Activated naive CD8-positive, alpha-beta T cell treated with anti-CD3 and anti-CD28 coated beads, Interleukin-2, amount 10 ng/mL, durations not matched to agents 7 days and 5 days (primary cell): ENCODE measurements at regions of chr1 and their contacts with region 1.

Region 1: GRCh38 chr1:37514350-37515184 is at the start of gene MEAF6:
- DNase-seq: peak; percentile 93
- ATAC-seq: peak; percentile 93
- H3K4me3 Mint-ChIP-seq: peak within 1 kb of the TSS; percentile 96
- H3K27ac Mint-ChIP-seq: peak within 1 kb of the TSS; percentile 96
- H3K4me1 Mint-ChIP-seq: peaks cover 37% of the 10 kb centered on the region
- H3K27me3 Mint-ChIP-seq: no peaks in the 10 kb centered on the region
- total RNA-seq, gene MEAF6: 73.8 to 80.6 TPM

Region 2: GRCh38 chr1:37323486-37324377 is 190.8 kb before region 1 on chr1:
- POLR2A ChIA-PET with region 1: no interaction called
- DNase-seq: no peak
- ATAC-seq: no peak
- H3K4me3 Mint-ChIP-seq: no peak overlapping the region
- H3K27ac Mint-ChIP-seq: no peak overlapping the region
- H3K4me1 Mint-ChIP-seq: peaks cover under 1% of the 10 kb centered on the region
- H3K27me3 Mint-ChIP-seq: peaks cover 25% of the 10 kb centered on the region

Region 3: DNA sequence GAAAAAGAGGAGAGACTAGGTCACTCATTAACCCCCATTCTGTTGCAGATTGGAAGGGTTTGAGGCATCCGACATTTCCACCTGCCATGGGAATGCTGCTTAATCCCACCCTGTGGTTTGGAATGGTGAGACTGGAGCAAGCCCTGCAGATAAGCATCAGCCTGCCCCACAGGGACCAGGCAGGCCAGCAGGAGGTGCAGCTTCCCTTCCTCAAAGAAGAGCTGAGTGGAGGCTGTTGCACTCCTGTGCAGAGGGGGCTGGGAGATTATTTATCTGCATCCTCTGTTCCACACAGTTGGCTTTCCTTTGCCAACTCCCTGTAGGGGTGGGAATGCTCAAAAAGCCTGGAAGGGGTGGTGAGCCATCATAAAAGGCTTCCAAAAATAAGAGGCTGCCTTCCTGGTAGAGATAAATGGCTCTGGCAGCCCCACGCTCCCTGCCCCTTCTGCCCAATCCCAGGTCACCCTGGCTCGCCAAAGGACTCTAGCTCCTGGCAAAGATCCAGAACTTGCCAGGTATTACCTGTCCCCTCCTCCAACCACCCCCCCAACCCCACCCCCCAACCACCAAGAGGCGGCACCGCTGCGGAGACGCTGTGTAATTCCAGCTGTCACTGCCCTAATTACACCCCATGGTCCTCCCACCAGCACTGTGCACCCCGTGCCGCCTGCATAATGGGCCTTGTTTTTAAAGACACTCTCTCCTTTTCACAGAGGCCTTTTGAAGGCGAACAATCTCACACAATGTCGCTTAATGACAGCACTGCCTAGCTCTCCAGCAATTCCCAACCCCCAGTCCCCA is 123.2 kb before region 1 on chr1:
- POLR2A ChIA-PET with region 1: no interaction called
- DNase-seq: no peak
- ATAC-seq: no peak
- H3K4me3 Mint-ChIP-seq: no peak overlapping the region
- H3K27ac Mint-ChIP-seq: no peak overlapping the region
- H3K4me1 Mint-ChIP-seq: no peaks in the 10 kb centered on the region
- H3K27me3 Mint-ChIP-seq: peaks cover 25% of the 10 kb centered on the region

Region 4: GRCh38 chr1:37455516-37455915 is 59.1 kb before region 1 on chr1:
- POLR2A ChIA-PET with region 1: no interaction called
- DNase-seq: no peak
- ATAC-seq: no peak
- H3K4me3 Mint-ChIP-seq: no peak overlapping the region
- H3K27ac Mint-ChIP-seq: no peak overlapping the region
- H3K4me1 Mint-ChIP-seq: peaks cover 9% of the 10 kb centered on the region
- H3K27me3 Mint-ChIP-seq: no peaks in the 10 kb centered on the region

Region 5: DNA sequence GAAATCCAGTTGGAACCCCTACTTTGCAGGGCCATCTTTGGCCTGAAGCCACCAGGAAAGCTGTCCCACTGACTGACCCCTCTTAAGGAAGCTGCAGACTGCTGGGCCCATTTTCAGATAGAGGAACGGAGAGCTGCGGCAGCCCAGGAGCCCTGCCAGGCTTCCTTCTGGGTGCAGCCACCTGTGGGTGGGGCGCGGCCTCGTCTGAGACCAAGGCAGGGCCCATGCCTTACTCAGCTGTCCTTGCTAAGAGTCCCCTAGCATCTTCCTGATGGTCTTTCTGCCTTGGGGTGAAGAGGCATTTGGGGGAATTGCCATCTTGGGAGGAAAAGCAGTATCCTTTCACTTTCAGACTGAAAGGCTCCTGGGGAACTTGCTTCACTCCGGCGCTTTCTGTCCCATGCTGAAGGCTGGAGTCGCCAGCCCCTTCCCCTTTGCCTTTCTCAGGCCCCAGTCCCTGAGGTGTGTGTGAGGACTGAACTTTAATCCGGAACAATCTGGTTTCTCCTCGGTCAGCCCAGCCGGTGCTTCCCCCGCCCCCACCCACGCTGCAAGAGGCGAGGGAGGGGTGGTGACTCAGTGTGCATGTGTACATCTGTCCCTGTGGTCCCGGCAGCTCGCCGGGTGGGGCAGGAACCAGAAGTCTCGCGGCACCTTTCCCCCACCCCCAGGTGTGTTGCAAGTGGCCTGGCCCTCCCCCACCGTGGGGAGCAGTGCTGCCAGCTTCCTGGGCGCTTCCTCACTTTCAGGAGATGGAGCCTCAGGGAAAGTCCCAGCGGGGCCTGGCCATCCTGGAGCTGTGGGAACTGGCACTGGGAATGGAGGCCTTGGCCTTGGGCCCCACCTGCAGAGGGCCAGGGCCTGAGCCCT is 35.1 kb before region 1 on chr1:
- POLR2A ChIA-PET with region 1: interaction called, 32 read pairs
- DNase-seq: peak; percentile 80
- ATAC-seq: peak; percentile 71
- H3K4me3 Mint-ChIP-seq: peak overlapping the region; percentile 99
- H3K27ac Mint-ChIP-seq: peak overlapping the region; percentile 98
- H3K4me1 Mint-ChIP-seq: peaks cover 27% of the 10 kb centered on the region
- H3K27me3 Mint-ChIP-seq: no peaks in the 10 kb centered on the region

Region 6: GRCh38 chr1:37553927-37554808 is 39.6 kb after region 1 on chr1 and contains the start of gene SNIP1:
- POLR2A ChIA-PET with region 1: interaction called, 12 read pairs
- DNase-seq: peak; percentile 86
- ATAC-seq: peak; percentile 88
- H3K4me3 Mint-ChIP-seq: peak within 1 kb of the TSS; percentile 99
- H3K27ac Mint-ChIP-seq: peak within 1 kb of the TSS; percentile 100
- H3K4me1 Mint-ChIP-seq: peaks cover 29% of the 10 kb centered on the region
- H3K27me3 Mint-ChIP-seq: no peaks in the 10 kb centered on the region
- total RNA-seq, gene SNIP1: 29.3 to 32.3 TPM

Region 7: DNA sequence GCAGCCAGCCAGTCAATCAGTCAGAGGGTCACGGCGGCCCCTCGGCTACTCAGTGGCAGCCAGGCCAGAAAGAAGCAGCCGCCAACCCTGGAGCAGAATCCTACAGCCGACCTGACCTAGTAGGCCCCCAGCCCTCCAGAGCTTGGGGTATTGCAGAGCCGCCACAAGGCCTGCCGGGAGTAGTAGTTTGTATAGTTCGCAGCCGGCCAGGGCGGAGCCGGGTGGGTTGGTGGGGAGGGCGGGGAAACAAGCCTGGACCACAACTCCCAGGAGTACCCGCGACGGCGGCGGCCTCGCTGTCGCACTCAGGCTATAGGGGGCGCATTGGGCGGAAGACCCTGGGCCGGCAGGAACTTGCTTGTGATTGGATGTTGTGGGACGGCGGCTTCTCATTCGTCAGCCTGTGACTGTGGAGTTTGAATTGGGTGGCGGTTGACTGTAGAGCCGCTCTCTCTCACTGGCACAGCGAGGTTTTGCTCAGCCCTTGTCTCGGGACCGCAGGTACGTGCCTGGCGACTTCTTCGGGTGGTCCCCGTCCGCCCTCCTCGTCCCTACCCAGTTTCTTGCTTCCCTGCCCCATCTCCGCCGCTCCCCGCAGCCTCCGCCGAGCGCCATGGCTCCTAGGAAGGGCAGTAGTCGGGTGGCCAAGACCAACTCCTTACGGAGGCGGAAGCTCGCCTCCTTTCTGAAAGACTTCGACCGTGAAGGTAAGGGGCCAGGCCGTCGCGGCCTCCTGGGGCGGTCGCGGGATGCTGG is 177.7 kb after region 1 on chr1 and contains the start of gene CDCA8:
- POLR2A ChIA-PET with region 1: interaction called, 12 read pairs
- DNase-seq: peak; percentile 97
- ATAC-seq: peak; percentile 86
- H3K4me3 Mint-ChIP-seq: peak within 1 kb of the TSS; percentile 89
- H3K27ac Mint-ChIP-seq: peak within 1 kb of the TSS; percentile 92
- H3K4me1 Mint-ChIP-seq: peaks cover 35% of the 10 kb centered on the region
- H3K27me3 Mint-ChIP-seq: no peaks in the 10 kb centered on the region
- total RNA-seq, gene CDCA8: 64.7 to 67.0 TPM